Activated naive CD4-positive, alpha-beta T cell treated with anti-CD3 and anti-CD28 coated beads for 36 hours (primary cell): ENCODE measurements at regions of chr9 and their contacts with region 1.

Region 1: DNA sequence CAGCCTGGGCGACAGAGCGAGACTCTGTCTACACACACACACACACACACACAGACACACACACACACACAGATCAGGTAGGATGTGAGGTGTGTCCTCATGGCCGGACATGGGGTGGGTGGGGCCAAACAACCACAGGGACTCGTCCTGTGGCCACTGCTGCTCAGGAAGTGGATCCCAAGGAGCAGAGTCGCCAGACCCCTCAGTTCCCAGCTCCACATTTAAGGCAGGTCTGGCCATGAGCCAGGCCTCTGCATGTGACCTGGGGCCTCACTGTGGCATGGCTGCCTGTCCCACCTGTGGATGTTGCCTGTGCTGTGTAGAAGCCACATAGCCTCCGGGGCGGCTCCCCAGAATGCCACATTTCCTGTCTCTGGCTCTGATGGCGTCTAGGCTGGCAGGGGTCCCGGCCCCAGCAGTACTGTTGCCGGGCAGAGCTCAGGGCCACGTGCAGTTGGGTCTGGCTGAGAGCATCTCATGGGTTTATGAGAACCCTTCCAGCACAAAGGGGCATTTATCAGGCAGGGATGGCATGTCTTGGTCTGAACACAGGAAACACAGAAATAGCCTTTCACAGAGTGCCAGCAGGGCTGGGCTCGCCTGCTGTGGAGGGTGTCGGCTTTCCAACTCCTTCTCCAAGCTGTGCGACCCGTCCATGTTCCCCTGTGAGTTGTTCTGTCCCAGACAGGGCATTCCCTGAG is 9.9 kb upstream of the NINJ1 start:
- DNase-seq: peak; percentile 67
- H3K4me3 Mint-ChIP-seq: no peak overlapping the region
- H3K27ac Mint-ChIP-seq: peak overlapping the region; percentile 79
- H3K4me1 Mint-ChIP-seq: peaks cover 68% of the 10 kb centered on the region
- H3K27me3 Mint-ChIP-seq: no peaks in the 10 kb centered on the region

Region 2: GRCh38 chr9:92954049-92954861 is 189.7 kb before region 1 on chr9:
- CTCF ChIA-PET with region 1: no interaction called
- intact Hi-C with region 1: loop called (anchors 2 kb)
- DNase-seq: peak; percentile 95
- H3K4me3 Mint-ChIP-seq: peak overlapping the region; percentile 60
- H3K27ac Mint-ChIP-seq: peak overlapping the region; percentile 91
- H3K4me1 Mint-ChIP-seq: peaks cover 75% of the 10 kb centered on the region
- H3K27me3 Mint-ChIP-seq: no peaks in the 10 kb centered on the region

Region 3: GRCh38 chr9:92963831-92964626 is 180.0 kb before region 1 on chr9:
- CTCF ChIA-PET with region 1: no interaction called
- intact Hi-C with region 1: loop called (anchors 1 kb)
- DNase-seq: peak; percentile 86
- H3K4me3 Mint-ChIP-seq: peak overlapping the region; percentile 99
- H3K27ac Mint-ChIP-seq: peak overlapping the region; percentile 100
- H3K4me1 Mint-ChIP-seq: peaks cover 56% of the 10 kb centered on the region
- H3K27me3 Mint-ChIP-seq: no peaks in the 10 kb centered on the region

Region 4: GRCh38 chr9:92986176-92987085 is 157.5 kb before region 1 on chr9:
- CTCF ChIA-PET with region 1: interaction called, 4 read pairs
- intact Hi-C with region 1: loop called (anchors 5 kb)
- DNase-seq: peak; percentile 84
- H3K4me3 Mint-ChIP-seq: no peak overlapping the region
- H3K27ac Mint-ChIP-seq: peak overlapping the region; percentile 92
- H3K4me1 Mint-ChIP-seq: peaks cover 73% of the 10 kb centered on the region
- H3K27me3 Mint-ChIP-seq: no peaks in the 10 kb centered on the region

Region 5: GRCh38 chr9:93154315-93154903 is 10.4 kb after region 1 on chr9:
- CTCF ChIA-PET with region 1: interaction called, 13 read pairs
- intact Hi-C with region 1: loop called (anchors 1 kb)
- DNase-seq: peak; percentile 75
- H3K4me3 Mint-ChIP-seq: no peak overlapping the region
- H3K27ac Mint-ChIP-seq: no peak overlapping the region
- H3K4me1 Mint-ChIP-seq: peaks cover 25% of the 10 kb centered on the region
- H3K27me3 Mint-ChIP-seq: no peaks in the 10 kb centered on the region